ENCODE measurements at regions of chr5 and their contacts with region 1.

Region 1: DNA sequence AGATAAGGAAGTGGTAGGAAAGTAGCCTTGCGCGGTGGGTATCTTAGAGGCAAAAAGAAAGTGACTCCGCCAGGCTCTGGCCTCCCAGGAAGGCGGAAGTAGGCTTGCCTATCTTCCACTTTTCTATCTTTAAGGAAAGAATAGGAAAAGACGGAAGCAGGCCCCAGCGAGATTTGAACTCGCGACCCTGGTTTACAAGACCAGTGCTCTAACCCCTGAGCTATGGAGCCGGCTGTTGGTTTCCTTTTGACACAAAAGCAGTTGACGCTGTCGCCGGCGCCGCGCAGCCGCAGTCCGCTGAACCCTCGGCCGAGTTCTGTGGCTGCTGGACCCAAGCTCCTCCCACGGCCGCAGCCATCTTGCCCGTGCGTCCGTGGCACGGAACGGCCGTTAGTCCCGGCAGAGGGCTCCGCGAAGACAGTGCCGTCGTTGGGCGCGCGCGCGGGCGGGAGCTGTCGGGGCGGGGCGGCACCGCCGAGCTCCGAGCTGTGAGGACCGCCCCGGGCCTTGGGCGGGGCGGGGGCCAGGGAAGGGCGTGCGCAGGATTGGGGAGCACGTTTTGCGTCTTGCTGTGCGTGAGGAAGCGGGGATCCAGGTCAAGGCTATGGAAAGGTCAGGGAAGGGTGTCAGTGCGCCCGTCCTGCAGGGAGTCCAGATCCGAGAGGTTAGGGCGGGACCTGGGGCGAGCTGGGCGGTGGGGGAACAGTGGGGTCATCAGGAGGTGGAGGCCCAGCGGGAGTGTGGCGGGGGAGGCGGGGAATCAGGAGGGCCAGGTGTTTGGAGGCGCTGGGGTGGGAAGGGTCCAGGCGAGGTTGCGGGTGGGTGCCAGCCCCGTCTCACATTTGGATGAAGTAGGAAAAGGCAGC is 13.2 kb downstream of the TRIM7 start:
- DNase-seq: no peak
- ATAC-seq: peak; percentile 75
- H3K4me3 ChIP-seq: peak overlapping the region; percentile 85 to 98
- H3K27ac ChIP-seq: peak overlapping the region; percentile 82
- H3K4me1 ChIP-seq: peaks cover 15% of the 10 kb centered on the region
- H3K27me3 ChIP-seq: no peaks in the 10 kb centered on the region
- CTCF ChIP-seq: no peak

Region 2: GRCh38 chr5:181159286-181159829 is 32.4 kb before region 1 on chr5:
- CTCF ChIA-PET with region 1: no interaction called
- POLR2A ChIA-PET with region 1: no interaction called
- in situ Hi-C with region 1: no loop called
- intact Hi-C with region 1: no loop called
- DNase-seq: no peak
- ATAC-seq: peak; percentile 88
- H3K4me3 ChIP-seq: peak overlapping the region in 1 of 2 experiments; percentile 20; a peak in 1 of 4 replicates
- H3K27ac ChIP-seq: peak overlapping the region; percentile 88
- H3K4me1 ChIP-seq: peaks cover 23% of the 10 kb centered on the region
- H3K27me3 ChIP-seq: no peaks in the 10 kb centered on the region
- CTCF ChIP-seq: peak; percentile 94

Region 3: GRCh38 chr5:181223058-181223728 is 31.4 kb after region 1 on chr5 and contains the start of gene TRIM41:
- CTCF ChIA-PET with region 1: no interaction called
- POLR2A ChIA-PET with region 1: interaction called, 14 read pairs
- in situ Hi-C with region 1: no loop called
- intact Hi-C with region 1: loop called (anchors 2 kb)
- DNase-seq: peak; percentile 94
- ATAC-seq: peak; percentile 72
- H3K4me3 ChIP-seq: peak within 1 kb of the TSS; percentile 77 to 83
- H3K27ac ChIP-seq: peak within 1 kb of the TSS; percentile 96
- H3K4me1 ChIP-seq: peaks cover 25% of the 10 kb centered on the region
- H3K27me3 ChIP-seq: no peaks in the 10 kb centered on the region
- CTCF ChIP-seq: no peak
- total RNA-seq, gene TRIM41: 58.3 TPM

Region 4: GRCh38 chr5:181234455-181235306 is 42.9 kb after region 1 on chr5:
- CTCF ChIA-PET with region 1: no interaction called
- POLR2A ChIA-PET with region 1: no interaction called
- in situ Hi-C with region 1: no loop called
- intact Hi-C with region 1: no loop called
- DNase-seq: no peak
- ATAC-seq: peak; percentile 46
- H3K4me3 ChIP-seq: no peak overlapping the region
- H3K27ac ChIP-seq: no peak overlapping the region
- H3K4me1 ChIP-seq: peaks cover 9% of the 10 kb centered on the region
- H3K27me3 ChIP-seq: no peaks in the 10 kb centered on the region
- CTCF ChIP-seq: no peak

Measured in Panc1 (cell line).